ENCODE measurements at regions of chr5 and their contacts with region 1.

Region 1: GRCh38 chr5:160342403-160342941 is 28.0 kb downstream of the C1QTNF2 start:
- DNase-seq: peak; percentile 72
- H3K4me3 Mint-ChIP-seq: no peak overlapping the region
- H3K27ac Mint-ChIP-seq: no peak overlapping the region
- H3K4me1 Mint-ChIP-seq: no peaks in the 10 kb centered on the region
- H3K27me3 Mint-ChIP-seq: no peaks in the 10 kb centered on the region
- CTCF ChIP-seq: no peak

Region 2: GRCh38 chr5:160082614-160083500 is 259.6 kb before region 1 on chr5:
- CTCF ChIA-PET with region 1: interaction called, 45 read pairs
- POLR2A ChIA-PET with region 1: no interaction called
- intact Hi-C with region 1: loop called (anchors 1 kb)
- DNase-seq: peak; percentile 61
- H3K4me3 Mint-ChIP-seq: no peak overlapping the region
- H3K27ac Mint-ChIP-seq: no peak overlapping the region
- H3K4me1 Mint-ChIP-seq: peaks cover 17% of the 10 kb centered on the region
- H3K27me3 Mint-ChIP-seq: no peaks in the 10 kb centered on the region
- CTCF ChIP-seq: no peak

Region 3: GRCh38 chr5:160199410-160199911 is 143.0 kb before region 1 on chr5:
- CTCF ChIA-PET with region 1: interaction called, 317 read pairs
- POLR2A ChIA-PET with region 1: interaction called, 6 read pairs
- intact Hi-C with region 1: loop called (anchors 1 kb)
- DNase-seq: peak; percentile 66
- H3K4me3 Mint-ChIP-seq: peak overlapping the region; percentile 6
- H3K27ac Mint-ChIP-seq: no peak overlapping the region
- H3K4me1 Mint-ChIP-seq: peaks cover 5% of the 10 kb centered on the region
- H3K27me3 Mint-ChIP-seq: peaks cover 10% of the 10 kb centered on the region
- CTCF ChIP-seq: peak; percentile 100

Region 4: GRCh38 chr5:160230686-160231527 is 111.6 kb before region 1 on chr5:
- CTCF ChIA-PET with region 1: interaction called, 13 read pairs
- POLR2A ChIA-PET with region 1: no interaction called
- intact Hi-C with region 1: no loop called
- DNase-seq: peak; percentile 76
- H3K4me3 Mint-ChIP-seq: no peak overlapping the region
- H3K27ac Mint-ChIP-seq: no peak overlapping the region
- H3K4me1 Mint-ChIP-seq: peaks cover 6% of the 10 kb centered on the region
- H3K27me3 Mint-ChIP-seq: no peaks in the 10 kb centered on the region
- CTCF ChIP-seq: no peak

Region 5: GRCh38 chr5:160287378-160288051 is 55.0 kb before region 1 on chr5:
- CTCF ChIA-PET with region 1: interaction called, 13 read pairs
- POLR2A ChIA-PET with region 1: no interaction called
- intact Hi-C with region 1: no loop called
- DNase-seq: peak; percentile 87
- H3K4me3 Mint-ChIP-seq: no peak overlapping the region
- H3K27ac Mint-ChIP-seq: no peak overlapping the region
- H3K4me1 Mint-ChIP-seq: peaks cover 18% of the 10 kb centered on the region
- H3K27me3 Mint-ChIP-seq: no peaks in the 10 kb centered on the region
- CTCF ChIP-seq: no peak

Region 6: GRCh38 chr5:160363211-160363610 is 20.7 kb after region 1 on chr5:
- CTCF ChIA-PET with region 1: interaction called, 25 read pairs
- POLR2A ChIA-PET with region 1: no interaction called
- intact Hi-C with region 1: no loop called
- DNase-seq: no peak
- H3K4me3 Mint-ChIP-seq: no peak overlapping the region
- H3K27ac Mint-ChIP-seq: no peak overlapping the region
- H3K4me1 Mint-ChIP-seq: peaks cover 7% of the 10 kb centered on the region
- H3K27me3 Mint-ChIP-seq: no peaks in the 10 kb centered on the region
- CTCF ChIP-seq: no peak